MCF 10A (cell line): ENCODE measurements at regions of chr14 and their contacts with region 1.

Region 1: DNA sequence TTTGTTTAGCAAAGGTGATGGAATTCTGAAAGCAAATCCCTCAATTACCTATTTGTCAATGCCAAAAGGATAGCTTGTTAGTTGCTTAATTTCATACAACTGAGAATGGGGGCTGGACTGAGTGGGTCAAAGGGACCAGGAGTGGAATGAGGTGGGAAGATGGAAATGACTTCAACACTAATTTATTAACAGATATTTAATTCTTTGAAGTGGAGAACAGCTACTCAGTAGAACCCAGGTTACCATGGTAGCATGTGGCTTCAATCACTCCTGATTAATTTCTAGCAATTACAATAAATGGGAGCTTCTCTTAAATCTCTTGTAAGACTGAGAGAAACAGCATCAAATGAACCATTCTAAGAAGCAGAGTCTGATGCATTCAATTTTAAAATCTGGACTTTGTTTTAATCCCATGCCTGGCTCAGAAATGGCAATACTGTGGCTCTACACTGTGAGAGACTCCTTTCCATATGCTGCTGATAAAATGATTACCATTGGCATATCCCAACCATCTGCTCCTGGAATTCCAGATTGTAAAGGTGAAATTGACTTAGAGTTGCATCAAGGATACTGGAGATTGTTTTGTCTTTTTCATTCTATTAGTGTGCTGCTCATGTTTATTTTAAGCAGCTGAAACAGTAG is 607.8 kb downstream of the SNAPC1 start:
- DNase-seq: no peak
- H3K4me3 Mint-ChIP-seq: no peak overlapping the region
- H3K27ac Mint-ChIP-seq: no peak overlapping the region
- H3K4me1 Mint-ChIP-seq: peaks cover 4% of the 10 kb centered on the region
- H3K27me3 Mint-ChIP-seq: no peaks in the 10 kb centered on the region
- CTCF ChIP-seq: no peak

Region 2: DNA sequence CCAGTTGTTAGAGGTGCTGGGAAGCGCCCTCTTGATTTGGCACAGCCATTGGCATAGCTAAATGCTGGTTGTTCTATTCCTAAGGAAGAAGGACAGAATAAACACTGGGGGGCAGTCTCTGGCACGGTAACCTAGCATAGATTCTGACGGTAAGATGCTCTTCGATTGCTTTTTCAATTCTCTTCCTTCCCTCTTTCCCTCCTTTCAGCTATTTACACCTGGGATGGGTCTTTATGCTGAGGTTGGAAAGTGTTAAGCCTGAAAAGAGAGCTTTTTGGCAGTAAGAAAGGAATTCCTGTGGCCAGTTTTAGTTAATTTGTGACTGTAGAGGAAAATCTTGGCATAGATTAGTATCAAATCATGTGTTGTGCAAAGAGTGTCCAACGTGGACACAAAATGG is 445.0 kb before region 1 on chr14:
- CTCF ChIA-PET with region 1: no interaction called
- POLR2A ChIA-PET with region 1: no interaction called
- intact Hi-C with region 1: no loop called
- DNase-seq: peak; percentile 64
- H3K4me3 Mint-ChIP-seq: no peak overlapping the region
- H3K27ac Mint-ChIP-seq: no peak overlapping the region
- H3K4me1 Mint-ChIP-seq: peaks cover 22% of the 10 kb centered on the region
- H3K27me3 Mint-ChIP-seq: no peaks in the 10 kb centered on the region
- CTCF ChIP-seq: peak; percentile 49

Region 3: GRCh38 chr14:62308891-62309290 is 61.1 kb before region 1 on chr14:
- CTCF ChIA-PET with region 1: interaction called, 11 read pairs
- POLR2A ChIA-PET with region 1: no interaction called
- intact Hi-C with region 1: no loop called
- DNase-seq: no peak
- H3K4me3 Mint-ChIP-seq: no peak overlapping the region
- H3K27ac Mint-ChIP-seq: no peak overlapping the region
- H3K4me1 Mint-ChIP-seq: peaks cover 7% of the 10 kb centered on the region
- H3K27me3 Mint-ChIP-seq: no peaks in the 10 kb centered on the region
- CTCF ChIP-seq: no peak